ENCODE measurements at regions of chr14 and their contacts with region 1.

Region 1: DNA sequence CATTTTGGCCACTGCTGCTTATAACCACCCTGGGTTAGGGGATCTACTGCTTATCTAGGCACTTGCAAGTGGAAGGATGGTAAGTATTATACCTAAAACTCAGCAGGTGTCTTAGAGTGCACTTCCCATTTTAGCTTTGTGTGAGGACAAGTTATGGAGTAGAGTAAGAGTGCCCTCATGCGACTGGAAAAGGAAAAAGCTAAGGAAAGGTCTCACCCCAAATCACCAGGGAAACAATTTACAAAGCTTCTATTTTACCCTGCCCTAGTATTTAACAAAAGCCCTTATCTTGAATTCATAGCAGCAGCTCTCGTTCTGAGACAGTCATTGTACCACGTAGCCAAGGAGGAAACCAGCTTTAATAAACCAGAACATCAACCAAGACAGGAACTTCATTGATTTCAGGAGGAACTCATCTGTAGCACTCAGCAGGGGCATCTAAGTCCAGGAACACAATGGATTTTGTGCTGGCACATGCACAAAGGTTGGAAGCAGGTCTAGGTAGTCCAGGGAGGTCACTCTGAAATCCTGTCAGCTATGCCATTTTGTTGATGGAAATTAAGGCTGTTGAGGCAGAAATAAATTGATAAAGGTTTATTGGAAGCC is 2.9 kb downstream of the RDH12 start:
- DNase-seq: peak; percentile 59
- H3K4me3 ChIP-seq: no peak overlapping the region
- H3K27ac ChIP-seq: no peak overlapping the region
- H3K4me1 ChIP-seq: no peaks in the 10 kb centered on the region
- H3K27me3 ChIP-seq: no peaks in the 10 kb centered on the region
- CTCF ChIP-seq: peak; percentile 78
- EP300 ChIP-seq: no peak
- RAD21 ChIP-seq: peak; percentile 92

Region 2: GRCh38 chr14:67435615-67436346 is 268.8 kb before region 1 on chr14:
- CTCF ChIA-PET with region 1: interaction called, 12 read pairs
- POLR2A ChIA-PET with region 1: interaction called, 3 read pairs
- DNase-seq: no peak
- H3K4me3 ChIP-seq: no peak overlapping the region
- H3K27ac ChIP-seq: no peak overlapping the region
- H3K4me1 ChIP-seq: no peaks in the 10 kb centered on the region
- H3K27me3 ChIP-seq: peaks cover 6% of the 10 kb centered on the region
- CTCF ChIP-seq: no peak
- EP300 ChIP-seq: no peak
- RAD21 ChIP-seq: no peak

Region 3: DNA sequence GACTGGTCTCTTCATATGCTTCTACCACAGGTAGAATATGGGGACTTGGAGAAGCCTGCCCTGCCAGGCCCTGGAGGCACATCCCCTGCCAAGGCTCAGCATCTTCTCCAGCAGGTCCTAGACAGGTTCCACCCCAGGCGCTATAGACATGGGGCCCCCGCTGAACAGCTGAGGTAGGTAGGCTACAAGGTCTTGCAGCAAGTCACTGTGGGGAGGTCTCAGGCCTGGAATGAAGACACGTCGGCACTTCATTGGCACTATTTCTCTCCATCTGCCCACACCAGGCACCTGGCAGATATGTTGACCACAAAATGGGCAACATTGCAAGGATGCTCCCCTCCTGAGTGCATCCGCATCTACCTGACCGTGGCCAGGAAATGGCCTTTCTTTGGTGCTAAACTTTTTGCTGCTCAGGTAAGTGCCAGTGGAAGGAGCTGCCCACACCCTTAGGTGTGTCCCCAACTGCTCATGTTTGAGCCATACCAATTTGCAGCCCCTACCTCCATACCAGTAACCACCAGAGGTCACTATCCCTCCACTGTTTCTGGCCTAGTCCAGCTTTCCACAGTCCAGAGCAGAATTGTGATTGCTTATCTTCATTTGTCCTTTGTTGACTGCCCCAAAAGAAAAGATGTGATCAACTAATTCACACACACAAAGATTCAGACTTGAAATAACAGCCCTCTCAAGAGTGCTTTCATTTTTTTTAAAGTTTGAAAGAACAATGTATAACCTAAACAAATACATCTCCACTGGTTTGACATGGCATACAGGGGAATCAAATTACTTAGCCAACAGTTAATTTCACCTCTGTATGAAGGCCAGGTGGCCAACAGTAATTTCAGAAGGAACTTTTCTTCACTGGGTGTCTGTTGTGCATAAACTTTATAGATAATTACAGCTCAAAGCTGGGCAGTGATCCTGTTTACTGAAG is 120.6 kb before region 1 on chr14:
- CTCF ChIA-PET with region 1: interaction called, 208 read pairs
- POLR2A ChIA-PET with region 1: no interaction called
- DNase-seq: peak; percentile 80
- H3K4me3 ChIP-seq: no peak overlapping the region; a peak in 1 of 4 replicates
- H3K27ac ChIP-seq: no peak overlapping the region
- H3K4me1 ChIP-seq: no peaks in the 10 kb centered on the region
- H3K27me3 ChIP-seq: no peaks in the 10 kb centered on the region
- CTCF ChIP-seq: peak; percentile 74
- EP300 ChIP-seq: no peak
- RAD21 ChIP-seq: peak; percentile 85

Region 4: DNA sequence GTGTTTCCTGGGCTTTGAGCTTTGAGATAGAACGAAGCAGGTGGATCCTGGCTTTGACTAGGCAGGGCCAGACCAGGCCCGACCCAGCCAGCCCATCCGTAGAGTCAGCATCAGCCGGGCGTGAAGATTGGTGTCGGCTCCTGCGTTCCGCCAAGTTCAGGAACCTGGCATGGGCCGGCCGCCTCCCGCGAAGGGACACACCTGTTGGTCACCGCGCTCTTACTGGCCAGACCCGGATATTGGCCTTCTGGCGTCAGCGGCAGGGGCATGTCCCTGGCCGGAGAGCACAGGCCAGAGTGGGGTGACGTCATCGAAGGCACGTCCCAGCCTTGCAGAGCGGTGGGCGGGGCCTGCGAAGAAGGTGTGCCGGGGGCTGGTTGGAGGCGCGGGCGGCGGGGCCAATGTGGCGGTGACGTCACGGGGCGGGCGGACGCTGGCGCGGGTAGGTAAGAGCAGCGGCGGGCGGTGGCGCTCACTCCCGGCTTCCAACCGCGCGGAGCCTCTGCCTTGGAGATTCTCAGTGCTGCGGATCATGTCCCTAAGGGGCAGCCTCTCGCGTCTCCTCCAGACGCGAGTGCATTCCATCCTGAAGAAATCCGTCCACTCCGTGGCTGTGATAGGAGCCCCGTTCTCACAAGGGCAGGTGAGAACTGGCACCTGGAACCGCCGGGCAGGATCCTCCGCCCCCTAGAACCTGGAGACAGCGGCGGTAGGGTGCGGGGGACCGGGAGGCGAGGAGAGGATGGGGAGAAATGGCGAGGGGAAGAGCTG is 85.0 kb before region 1 on chr14 and contains the start of gene ARG2:
- CTCF ChIA-PET with region 1: interaction called, 85 read pairs
- POLR2A ChIA-PET with region 1: interaction called, 4 read pairs
- DNase-seq: peak; percentile 97
- H3K4me3 ChIP-seq: peak within 1 kb of the TSS; percentile 72 to 80
- H3K27ac ChIP-seq: peak within 1 kb of the TSS; percentile 8 to 65; a peak in 3 of 4 replicates
- H3K4me1 ChIP-seq: peaks cover 5 to 10% of the 10 kb centered on the region in 2 experiments; a peak in 3 of 4 replicates
- H3K27me3 ChIP-seq: no peaks in the 10 kb centered on the region
- CTCF ChIP-seq: no peak
- EP300 ChIP-seq: no peak
- RAD21 ChIP-seq: no peak
- polyA plus RNA-seq, gene ARG2: 2.6 TPM in 2 replicates

Region 5: DNA sequence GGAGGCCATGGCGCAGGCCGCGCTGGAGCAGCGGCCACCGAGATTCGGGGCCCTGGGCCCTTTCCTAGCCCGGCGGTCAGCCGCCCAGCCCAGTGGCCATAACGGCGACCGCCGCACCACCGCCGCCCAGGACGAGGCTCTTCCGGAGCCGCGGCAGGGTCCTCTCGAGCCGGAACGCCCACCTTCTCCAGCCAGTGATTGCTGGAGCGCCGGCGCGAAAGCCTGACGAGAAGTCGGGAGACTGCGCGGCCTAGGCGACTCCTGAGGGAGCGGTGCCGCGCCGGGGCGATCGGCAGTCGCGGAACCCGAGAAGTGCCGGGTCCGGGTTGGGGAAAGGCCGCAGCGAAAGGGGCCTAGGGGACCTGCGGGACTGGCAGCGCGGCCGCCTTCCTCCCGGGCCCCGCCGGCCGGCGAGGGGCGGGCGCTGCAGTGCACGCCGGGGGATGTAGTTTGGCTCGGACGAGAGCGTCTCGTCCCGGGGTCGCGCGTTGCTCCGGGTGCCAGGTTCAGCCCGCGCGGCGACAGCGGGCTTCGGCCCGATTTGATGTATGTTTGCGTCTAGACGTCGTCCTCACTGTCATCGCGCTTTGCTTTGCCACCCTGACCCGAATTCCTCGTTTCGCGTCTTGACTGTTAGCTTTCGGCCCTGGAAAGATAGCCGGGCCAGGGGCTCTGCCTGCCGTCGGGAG is 30.0 kb before region 1 on chr14 and contains the start of gene VTI1B:
- CTCF ChIA-PET with region 1: interaction called, 21 read pairs
- POLR2A ChIA-PET with region 1: interaction called, 4 read pairs
- DNase-seq: peak; percentile 94
- H3K4me3 ChIP-seq: peak within 1 kb of the TSS; percentile 72 to 89
- H3K27ac ChIP-seq: peak within 1 kb of the TSS; percentile 92 to 96
- H3K4me1 ChIP-seq: peaks cover 1 to 7% of the 10 kb centered on the region in 2 experiments; a peak in 2 of 4 replicates
- H3K27me3 ChIP-seq: no peaks in the 10 kb centered on the region
- CTCF ChIP-seq: peak; percentile 40; the same call in 1 of the 2 replicates
- EP300 ChIP-seq: no peak; a peak in 1 of 4 replicates
- RAD21 ChIP-seq: no peak
- polyA plus RNA-seq, gene VTI1B: 59.2 and 71.8 TPM in 2 replicates